PC-3 (cell line): ENCODE measurements at regions of chrX and their contacts with region 1.

Region 1: DNA sequence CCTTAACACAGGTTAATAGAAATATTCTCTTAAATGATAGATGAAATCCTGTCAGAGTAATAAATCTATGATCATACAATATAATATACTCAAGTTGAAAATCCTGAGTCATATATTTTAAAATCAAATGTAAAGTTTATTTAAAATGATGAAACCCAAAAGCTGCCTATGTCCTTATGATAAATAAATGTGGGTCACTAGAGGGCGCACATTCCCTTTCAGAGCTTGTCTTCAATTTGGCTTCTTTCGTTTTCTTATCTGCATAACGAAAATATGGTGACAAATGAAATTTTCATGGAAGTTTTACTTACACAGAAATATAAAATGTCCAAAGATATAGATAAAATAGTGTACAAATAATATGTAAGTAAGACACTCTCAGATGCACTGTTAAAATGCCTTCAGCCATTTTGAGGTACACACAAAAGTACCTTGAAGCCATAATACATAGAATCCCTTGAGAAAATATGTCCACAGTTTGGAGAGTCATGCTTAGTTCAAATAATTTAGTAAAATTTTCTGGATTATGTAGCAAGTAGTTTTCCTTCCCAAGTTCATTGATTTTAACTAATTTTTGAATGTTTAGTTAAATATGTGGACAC is 680.4 kb downstream of the DMD start:
- DNase-seq: peak; percentile 55
- ATAC-seq: no peak
- H3K4me3 ChIP-seq: peak overlapping the region; percentile 38; the same call in 1 of the 2 replicates
- H3K27ac ChIP-seq: no peak overlapping the region
- H3K4me1 ChIP-seq: no peaks in the 10 kb centered on the region
- H3K27me3 ChIP-seq: no peaks in the 10 kb centered on the region
- CTCF ChIP-seq: peak; percentile 69

Region 2: DNA sequence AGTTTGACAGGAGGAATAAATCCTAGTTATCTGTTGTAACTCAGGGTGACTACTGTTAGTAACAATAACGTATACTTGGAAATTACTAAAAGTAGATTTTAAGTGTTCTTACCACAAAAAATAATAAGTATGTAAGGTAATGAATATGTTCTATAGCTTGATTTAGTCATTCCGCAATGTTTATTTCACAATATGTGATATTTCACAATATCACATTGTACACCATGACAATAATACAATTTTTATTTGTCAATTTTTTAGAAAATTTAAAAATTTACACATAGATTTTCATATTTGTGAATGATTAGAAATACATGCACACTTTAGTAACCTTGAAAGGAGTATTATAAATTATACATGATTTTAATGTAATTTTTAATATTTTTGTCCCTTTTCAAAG is 646.4 kb before region 1 on chrX:
- CTCF ChIA-PET with region 1: no interaction called
- POLR2A ChIA-PET with region 1: no interaction called
- intact Hi-C with region 1: no loop called
- DNase-seq: no peak
- ATAC-seq: no peak
- H3K4me3 ChIP-seq: no peak overlapping the region
- H3K27ac ChIP-seq: no peak overlapping the region
- H3K4me1 ChIP-seq: no peaks in the 10 kb centered on the region
- H3K27me3 ChIP-seq: no peaks in the 10 kb centered on the region
- CTCF ChIP-seq: no peak

Region 3: GRCh38 chrX:32614707-32615106 is 83.8 kb after region 1 on chrX:
- CTCF ChIA-PET with region 1: no interaction called
- POLR2A ChIA-PET with region 1: no interaction called
- intact Hi-C with region 1: no loop called
- DNase-seq: no peak
- ATAC-seq: no peak
- H3K4me3 ChIP-seq: no peak overlapping the region
- H3K27ac ChIP-seq: no peak overlapping the region
- H3K4me1 ChIP-seq: no peaks in the 10 kb centered on the region
- H3K27me3 ChIP-seq: no peaks in the 10 kb centered on the region
- CTCF ChIP-seq: no peak

Region 4: GRCh38 chrX:33336783-33337182 is 805.9 kb after region 1 on chrX:
- CTCF ChIA-PET with region 1: no interaction called
- POLR2A ChIA-PET with region 1: no interaction called
- intact Hi-C with region 1: loop called (anchors 5 kb)
- DNase-seq: peak; percentile 29
- ATAC-seq: no peak
- H3K4me3 ChIP-seq: no peak overlapping the region
- H3K27ac ChIP-seq: no peak overlapping the region
- H3K4me1 ChIP-seq: no peaks in the 10 kb centered on the region
- H3K27me3 ChIP-seq: no peaks in the 10 kb centered on the region
- CTCF ChIP-seq: peak; percentile 58